Adrenal gland (tissue), 19 donors: ENCODE measurements at regions of chr4 and their contacts with region 1.

Region 1: GRCh38 chr4:139509727-139510410 is 46.1 kb downstream of the SETD7 start:
- DNase-seq: peak in 1 of 7 donors; percentile 16
- H3K4me3 ChIP-seq: no peak overlapping the region
- H3K27ac ChIP-seq: no peak overlapping the region
- H3K4me1 ChIP-seq: peaks cover 0 to 5% of the 10 kb centered on the region in 2 donors
- H3K27me3 ChIP-seq: no peaks in the 10 kb centered on the region
- CTCF ChIP-seq: peak in 2 of 6 experiments; percentile 19 to 27
- POLR2A ChIP-seq: no peak

Region 2: GRCh38 chr4:139554893-139555704 is 45.2 kb after region 1 on chr4:
- intact Hi-C with region 1: loop called in 1 of 2 experiments (anchors 10 kb)
- DNase-seq: peak; percentile 91 to 96 (median 94)
- H3K4me3 ChIP-seq: peak overlapping the region; percentile 33 to 95 (median 58)
- H3K27ac ChIP-seq: peak overlapping the region; percentile 70 to 99 (median 97)
- H3K4me1 ChIP-seq: peaks cover 5 to 50% of the 10 kb centered on the region in 2 donors
- H3K27me3 ChIP-seq: no peaks in the 10 kb centered on the region
- CTCF ChIP-seq: no peak
- POLR2A ChIP-seq: peak; percentile 60 to 91